ENCODE measurements at regions of chr5 and their contacts with region 1.

Region 1: GRCh38 chr5:119951330-119951934 is 322.1 kb downstream of the FAM170A start:
- DNase-seq: no peak
- H3K4me3 ChIP-seq: no peak overlapping the region
- H3K27ac ChIP-seq: no peak overlapping the region
- H3K4me1 ChIP-seq: no peaks in the 10 kb centered on the region
- H3K27me3 ChIP-seq: no peaks in the 10 kb centered on the region
- CTCF ChIP-seq: no peak

Region 2: GRCh38 chr5:118806571-118806970 is 1144.9 kb before region 1 on chr5:
- intact Hi-C with region 1: no loop called
- DNase-seq: no peak
- H3K4me3 ChIP-seq: no peak overlapping the region
- H3K27ac ChIP-seq: no peak overlapping the region
- H3K4me1 ChIP-seq: no peaks in the 10 kb centered on the region
- H3K27me3 ChIP-seq: no peaks in the 10 kb centered on the region
- CTCF ChIP-seq: no peak

Region 3: DNA sequence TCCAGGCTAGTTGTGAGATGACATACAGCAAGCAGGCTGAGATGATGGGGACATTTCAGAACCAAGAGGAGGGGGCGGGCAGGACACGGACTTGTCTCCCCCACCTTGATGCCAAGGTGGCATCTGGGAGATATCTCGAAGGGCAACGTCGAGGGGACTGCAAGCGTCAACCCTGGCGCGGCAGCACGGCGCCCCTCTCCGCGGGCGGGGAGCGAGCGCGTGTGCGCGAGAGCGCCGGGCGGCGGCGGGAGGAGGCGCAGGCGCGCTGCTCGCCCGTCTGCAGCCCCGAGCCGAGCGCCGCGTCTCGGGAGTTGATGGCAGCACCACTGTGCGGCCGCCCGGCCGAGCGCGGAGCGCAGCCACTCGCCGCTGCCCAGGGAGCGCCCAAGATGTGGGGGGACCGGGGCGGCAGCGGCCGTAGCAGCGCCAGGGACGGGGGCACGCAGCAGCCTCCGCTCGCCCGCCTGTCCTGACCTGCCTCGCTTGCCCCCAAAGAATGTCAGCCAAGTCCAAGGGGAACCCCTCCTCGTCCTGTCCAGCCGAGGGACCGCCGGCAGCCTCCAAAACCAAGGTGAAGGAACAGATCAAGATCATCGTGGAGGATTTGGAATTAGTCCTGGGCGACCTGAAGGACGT is 512.7 kb after region 1 on chr5 and contains the start of gene PRR16:
- intact Hi-C with region 1: loop called (anchors 10 kb)
- DNase-seq: peak; percentile 46 to 74
- H3K4me3 ChIP-seq: peak within 1 kb of the TSS; percentile 64 to 65
- H3K27ac ChIP-seq: peak within 1 kb of the TSS; percentile 75 to 82
- H3K4me1 ChIP-seq: peaks cover 0 to 9% (median 5%) of the 10 kb centered on the region in 4 donors
- H3K27me3 ChIP-seq: no peaks in the 10 kb centered on the region
- CTCF ChIP-seq: peak; percentile 42 to 65